Heart right ventricle (tissue), 16 donors: ENCODE measurements at regions of chr14 and their contacts with region 1.

Region 1: DNA sequence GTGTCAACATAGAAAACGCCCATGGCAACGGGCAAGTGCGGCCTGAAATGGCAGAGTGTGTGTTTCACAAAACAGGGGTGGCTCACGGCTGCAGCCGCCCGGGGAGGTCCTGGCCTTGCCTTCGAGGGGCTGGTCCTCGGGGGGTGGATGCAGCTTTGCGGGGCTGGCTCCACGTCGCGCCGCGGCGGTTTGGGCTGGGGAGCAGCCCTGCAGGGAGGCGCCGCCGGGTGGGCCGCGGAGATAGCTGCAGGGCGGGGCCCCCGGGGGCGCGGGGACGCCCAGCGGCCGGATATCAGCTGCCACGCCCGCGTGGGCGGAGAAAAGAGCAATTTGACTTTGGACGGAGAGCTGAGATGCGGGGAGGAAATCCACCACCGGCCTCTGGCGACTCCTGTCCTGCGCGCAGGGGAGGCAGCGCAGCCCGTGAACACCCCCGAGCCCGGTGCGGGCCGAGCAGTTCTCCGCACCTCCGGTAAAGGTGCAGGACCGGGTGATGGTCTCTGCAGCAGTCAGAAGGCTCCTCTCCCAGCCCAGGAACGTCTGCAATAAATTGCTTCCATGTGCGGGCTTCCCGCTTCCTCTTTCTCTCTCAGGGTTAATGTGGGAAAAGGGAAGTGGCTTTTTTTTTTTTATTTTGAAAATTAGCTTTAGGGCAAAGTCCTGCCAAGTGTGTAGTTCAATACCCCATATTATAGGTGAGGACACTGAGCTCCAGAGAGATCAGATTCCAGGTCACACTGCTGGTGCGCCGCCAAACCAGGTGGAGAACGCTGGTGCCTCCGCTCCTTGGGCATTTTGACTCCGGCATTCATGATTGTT is 110.5 kb downstream of the ARF6 start:
- DNase-seq: peak; percentile 80 to 85
- ATAC-seq: peak; percentile 48 to 81 (median 60)
- H3K4me3 ChIP-seq: peak overlapping the region; percentile 1 to 66 (median 60)
- H3K27ac ChIP-seq: peak overlapping the region; percentile 16 to 94 (median 84)
- H3K4me1 ChIP-seq: peaks cover 14 to 60% (median 51%) of the 10 kb centered on the region in 9 donors
- H3K27me3 ChIP-seq: no peaks in the 10 kb centered on the region
- CTCF ChIP-seq: peak in 6 of 9 donors; percentile 14 to 54 (median 34)

Region 2: DNA sequence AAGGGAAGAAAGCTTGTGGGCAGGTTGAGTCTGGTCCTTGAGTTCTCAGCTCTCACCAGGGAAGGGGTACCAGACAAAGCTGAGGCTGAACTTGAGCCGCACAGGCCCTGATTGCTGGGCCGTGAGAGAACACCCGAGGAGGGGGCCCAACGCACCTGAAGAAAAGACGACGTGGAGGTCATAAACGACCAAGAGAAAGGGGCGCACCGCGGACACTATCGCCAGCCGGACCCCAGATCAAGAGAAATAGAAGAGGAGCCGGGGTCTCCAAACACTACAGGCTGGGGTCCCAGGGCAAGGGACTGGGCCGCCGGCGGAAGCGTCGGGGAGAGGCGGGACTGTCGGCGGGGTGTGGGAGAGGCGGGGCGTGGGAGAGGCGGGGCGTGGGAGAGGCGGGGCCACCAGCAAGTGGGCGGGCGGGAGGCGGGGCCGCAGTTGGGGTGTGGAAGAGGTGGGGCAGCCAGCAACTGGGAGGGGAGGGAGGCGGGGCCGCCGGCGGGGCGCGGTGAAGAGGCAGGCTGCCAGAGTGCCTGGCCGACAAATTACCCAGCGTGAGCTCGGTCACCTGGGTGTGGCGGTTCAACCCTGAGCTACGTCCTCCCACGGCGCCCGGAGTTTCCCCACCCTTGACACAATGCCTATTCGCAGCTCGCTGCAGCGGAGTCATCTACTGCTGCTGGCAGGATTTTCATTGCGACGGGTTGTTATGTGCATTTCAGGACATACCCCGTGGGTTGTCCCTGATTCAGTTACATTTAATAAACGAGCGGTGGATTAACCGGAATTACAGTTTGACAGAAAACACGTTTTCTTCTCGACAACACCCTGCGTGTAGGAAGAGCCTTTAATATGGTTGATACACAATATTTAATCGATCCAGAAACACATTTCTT is 135.3 kb before region 1 on chr14:
- intact Hi-C with region 1: loop called in 2 of 10 experiments (anchors 5 to 10 kb)
- DNase-seq: peak; percentile 96 to 98
- ATAC-seq: peak; percentile 95 to 98 (median 97)
- H3K4me3 ChIP-seq: peak overlapping the region; percentile 22 to 75 (median 62)
- H3K27ac ChIP-seq: peak overlapping the region; percentile 75 to 97 (median 94)
- H3K4me1 ChIP-seq: peaks cover 0 to 56% (median 21%) of the 10 kb centered on the region in 9 donors
- H3K27me3 ChIP-seq: no peaks in the 10 kb centered on the region
- CTCF ChIP-seq: peak in 1 of 9 donors; percentile 4

Region 3: DNA sequence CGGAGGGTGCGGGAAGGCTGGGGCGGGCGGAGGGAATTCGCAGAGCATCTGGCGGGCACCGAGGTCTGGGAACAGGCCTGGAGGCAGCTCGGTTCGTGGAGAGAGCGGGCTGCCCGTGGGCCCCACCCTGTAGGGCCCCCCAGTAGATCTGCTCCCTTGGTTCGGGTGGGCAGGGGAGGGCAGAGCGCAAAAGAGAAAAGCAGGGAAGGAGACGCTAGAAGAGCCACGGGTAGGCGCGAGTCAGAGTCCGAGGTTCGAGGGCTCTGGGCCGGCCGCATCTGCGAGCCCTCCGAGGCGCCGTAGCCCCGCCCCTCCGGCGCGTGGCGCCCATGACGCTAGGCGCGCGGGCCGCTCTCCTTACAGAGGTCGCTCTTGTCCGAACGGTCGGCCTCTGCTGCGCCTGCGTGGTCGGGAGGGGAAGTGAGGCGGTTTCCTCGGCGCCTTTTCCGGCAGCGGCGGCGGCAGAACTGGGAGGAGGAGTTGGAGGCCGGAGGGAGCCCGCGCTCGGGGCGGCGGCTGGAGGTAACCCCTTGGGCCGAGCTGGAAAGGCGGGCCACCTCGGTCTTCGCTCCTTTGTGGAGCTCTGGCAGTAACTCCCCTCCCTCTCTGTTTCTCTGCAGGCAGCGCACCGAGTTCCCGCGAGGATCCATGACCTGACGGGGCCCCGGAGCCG is 110.7 kb before region 1 on chr14 and contains the start of gene ARF6:
- intact Hi-C with region 1: loop called (anchors 1 to 10 kb)
- DNase-seq: peak; percentile 99 to 100
- ATAC-seq: peak; percentile 97 to 100 (median 99)
- H3K4me3 ChIP-seq: peak within 1 kb of the TSS; percentile 82 to 100 (median 94)
- H3K27ac ChIP-seq: peak within 1 kb of the TSS; percentile 98 to 100 (median 100)
- H3K4me1 ChIP-seq: peaks cover 7 to 45% (median 40%) of the 10 kb centered on the region in 9 donors
- H3K27me3 ChIP-seq: no peaks in the 10 kb centered on the region
- CTCF ChIP-seq: peak in 5 of 9 donors; percentile 9 to 45 (median 28)
- total RNA-seq, gene ARF6: 19.0 to 40.5 (median 25.5) TPM

Region 4: DNA sequence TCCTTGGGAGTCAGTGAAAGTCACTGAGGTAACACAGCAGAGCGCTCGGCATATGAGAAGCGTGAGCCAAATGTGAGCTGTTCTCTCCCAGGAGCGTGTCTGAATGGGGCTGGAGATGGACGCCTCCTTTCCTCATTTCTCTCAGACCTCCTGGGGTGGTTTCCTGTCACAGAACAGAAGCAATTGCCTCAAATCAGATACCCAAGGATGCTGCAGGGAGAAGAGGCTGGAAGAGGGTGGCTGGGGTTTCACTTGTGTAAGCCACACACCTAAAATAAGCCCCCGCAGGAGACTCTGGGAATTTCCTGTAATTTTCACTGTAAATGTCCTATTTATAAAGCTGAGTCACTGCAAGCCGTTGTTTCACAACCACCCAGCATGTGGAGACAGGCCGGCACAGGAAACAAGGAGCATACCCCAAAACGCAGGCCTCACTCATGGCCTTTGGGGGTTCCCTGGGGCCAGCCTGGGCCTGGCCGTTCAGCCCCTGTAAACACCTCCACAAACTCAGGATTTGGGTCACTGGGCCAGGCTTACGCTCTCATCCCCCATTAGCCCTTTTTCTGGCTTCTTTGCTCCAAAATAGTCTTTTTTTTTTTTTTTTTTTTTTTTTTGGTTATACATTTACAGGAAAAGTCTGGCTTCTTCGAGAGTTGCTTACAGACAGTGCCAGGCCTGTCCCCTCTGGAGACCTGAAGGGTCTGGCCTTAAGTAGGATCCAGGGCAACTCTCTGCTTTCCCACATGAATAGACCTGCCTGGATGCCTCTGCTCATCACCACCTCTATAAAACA is 57.6 kb after region 1 on chr14:
- intact Hi-C with region 1: loop called in 1 of 10 experiments (anchors 5 kb)
- DNase-seq: peak in 1 of 2 donors; percentile 67
- ATAC-seq: peak; percentile 74 to 87 (median 84)
- H3K4me3 ChIP-seq: no peak overlapping the region
- H3K27ac ChIP-seq: peak overlapping the region; percentile 41 to 92 (median 74)
- H3K4me1 ChIP-seq: peaks cover 14 to 78% (median 22%) of the 10 kb centered on the region in 9 donors
- H3K27me3 ChIP-seq: no peaks in the 10 kb centered on the region
- CTCF ChIP-seq: peak in 4 of 9 donors; percentile 10 to 26 (median 16)

Region 5: DNA sequence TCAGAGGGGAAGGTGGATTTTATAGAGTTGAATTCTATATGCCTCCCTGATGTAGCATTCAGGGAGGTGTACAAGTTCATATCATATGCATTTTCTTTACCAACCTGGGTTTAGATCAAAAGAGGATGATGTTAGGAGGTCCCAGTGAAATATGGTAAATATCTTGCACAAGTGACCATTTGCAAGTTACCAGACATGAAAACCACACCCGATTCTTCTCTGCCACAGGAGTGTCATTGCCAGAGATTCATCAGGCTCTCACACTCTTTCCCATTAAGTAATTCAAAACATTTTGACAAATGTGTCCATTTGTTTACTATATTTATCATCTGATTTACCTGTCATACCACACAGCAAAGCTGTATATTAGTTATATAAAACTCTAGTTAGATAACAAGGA is 69.0 kb after region 1 on chr14:
- intact Hi-C with region 1: no loop called
- DNase-seq: no peak
- ATAC-seq: no peak
- H3K4me3 ChIP-seq: no peak overlapping the region
- H3K27ac ChIP-seq: no peak overlapping the region
- H3K4me1 ChIP-seq: peaks cover 0 to 5% (median 0%) of the 10 kb centered on the region in 9 donors
- H3K27me3 ChIP-seq: no peaks in the 10 kb centered on the region
- CTCF ChIP-seq: no peak

Region 6: GRCh38 chr14:50109342-50109741 is 105.9 kb after region 1 on chr14:
- intact Hi-C with region 1: loop called in 2 of 10 experiments (anchors 5 to 10 kb)
- DNase-seq: no peak
- ATAC-seq: no peak
- H3K4me3 ChIP-seq: no peak overlapping the region
- H3K27ac ChIP-seq: no peak overlapping the region
- H3K4me1 ChIP-seq: peaks cover 0 to 9% (median 0%) of the 10 kb centered on the region in 9 donors
- H3K27me3 ChIP-seq: no peaks in the 10 kb centered on the region
- CTCF ChIP-seq: no peak